PC-9 (cell line): ENCODE measurements at regions of chr4 and their contacts with region 1.

Region 1: GRCh38 chr4:152996108-152996571 is 60.0 kb downstream of the FHDC1 start:
- DNase-seq: peak; percentile 78 to 85
- H3K4me3 ChIP-seq: peak overlapping the region; percentile 31; the same call in 1 of the 2 replicates
- H3K27ac ChIP-seq: peak overlapping the region; percentile 84
- H3K4me1 ChIP-seq: peaks cover 53% of the 10 kb centered on the region
- H3K27me3 ChIP-seq: no peaks in the 10 kb centered on the region
- CTCF ChIP-seq: no peak

Region 2: DNA sequence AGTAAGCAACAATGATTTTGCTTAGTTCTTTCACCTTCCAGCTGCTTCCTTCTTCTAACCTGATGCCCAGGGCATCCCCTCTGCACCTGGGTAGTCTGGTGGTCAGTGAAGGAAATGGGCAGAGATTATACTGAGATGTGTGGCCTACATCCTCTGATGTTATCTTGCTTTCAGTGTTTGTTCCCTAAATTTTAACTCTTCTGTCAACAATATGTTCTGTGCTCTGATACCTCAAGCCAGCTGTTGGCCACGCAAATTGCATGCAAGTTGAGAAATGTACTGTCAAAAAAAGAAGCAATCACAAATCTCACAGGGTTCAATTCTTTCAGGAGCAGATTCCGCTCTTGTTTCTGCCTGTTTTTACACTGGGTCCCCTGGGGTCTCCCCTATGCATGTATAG is 534.1 kb before region 1 on chr4:
- CTCF ChIA-PET with region 1: no interaction called
- POLR2A ChIA-PET with region 1: no interaction called
- intact Hi-C with region 1: no loop called
- DNase-seq: no peak
- H3K4me3 ChIP-seq: no peak overlapping the region
- H3K27ac ChIP-seq: no peak overlapping the region
- H3K4me1 ChIP-seq: no peaks in the 10 kb centered on the region; the same call in 1 of the 2 replicates
- H3K27me3 ChIP-seq: no peaks in the 10 kb centered on the region
- CTCF ChIP-seq: no peak

Region 3: GRCh38 chr4:152970102-152970820 is 25.9 kb before region 1 on chr4:
- CTCF ChIA-PET with region 1: interaction called, 9 read pairs
- POLR2A ChIA-PET with region 1: interaction called, 21 read pairs
- intact Hi-C with region 1: loop called (anchors 1 kb)
- DNase-seq: peak; percentile 77 to 92
- H3K4me3 ChIP-seq: no peak overlapping the region
- H3K27ac ChIP-seq: peak overlapping the region; percentile 88
- H3K4me1 ChIP-seq: peaks cover 59% of the 10 kb centered on the region
- H3K27me3 ChIP-seq: no peaks in the 10 kb centered on the region
- CTCF ChIP-seq: no peak

Region 4: DNA sequence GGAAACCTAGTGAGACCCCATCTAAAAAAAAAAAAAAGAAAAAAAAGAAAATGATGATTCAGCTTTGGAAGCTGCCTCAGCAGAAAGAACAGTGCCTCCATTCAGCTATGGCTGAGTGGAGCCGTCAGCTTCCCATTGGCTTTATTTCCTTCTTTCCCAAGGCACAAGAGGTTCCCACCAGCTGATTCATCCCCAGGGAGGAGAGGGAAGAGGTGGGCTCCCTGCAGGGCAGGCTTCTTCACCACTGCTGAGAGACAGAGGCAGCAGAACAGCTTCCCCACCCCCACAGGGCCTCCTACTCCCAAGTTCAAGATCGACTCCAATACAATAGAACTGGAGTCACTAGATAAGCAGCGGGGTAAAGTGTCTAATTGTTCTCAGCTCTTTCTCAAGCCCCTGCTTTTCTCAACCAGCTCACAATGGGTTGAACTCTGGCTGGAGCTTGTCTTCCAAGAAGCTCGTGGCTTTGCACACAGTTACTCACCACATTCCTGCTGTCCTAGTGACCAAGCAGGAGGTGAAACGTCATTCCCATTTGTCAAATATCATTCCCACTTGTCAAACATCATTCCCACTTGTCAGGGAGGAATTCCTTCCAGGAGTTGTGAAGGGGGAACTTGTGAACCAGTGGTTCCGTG is 12.2 kb before region 1 on chr4:
- CTCF ChIA-PET with region 1: interaction called, 4 read pairs
- POLR2A ChIA-PET with region 1: interaction called, 5 read pairs
- intact Hi-C with region 1: loop called (anchors 1 kb)
- DNase-seq: peak; percentile 41 to 77
- H3K4me3 ChIP-seq: no peak overlapping the region
- H3K27ac ChIP-seq: peak overlapping the region; percentile 80
- H3K4me1 ChIP-seq: peaks cover 56% of the 10 kb centered on the region
- H3K27me3 ChIP-seq: no peaks in the 10 kb centered on the region
- CTCF ChIP-seq: no peak

Region 5: DNA sequence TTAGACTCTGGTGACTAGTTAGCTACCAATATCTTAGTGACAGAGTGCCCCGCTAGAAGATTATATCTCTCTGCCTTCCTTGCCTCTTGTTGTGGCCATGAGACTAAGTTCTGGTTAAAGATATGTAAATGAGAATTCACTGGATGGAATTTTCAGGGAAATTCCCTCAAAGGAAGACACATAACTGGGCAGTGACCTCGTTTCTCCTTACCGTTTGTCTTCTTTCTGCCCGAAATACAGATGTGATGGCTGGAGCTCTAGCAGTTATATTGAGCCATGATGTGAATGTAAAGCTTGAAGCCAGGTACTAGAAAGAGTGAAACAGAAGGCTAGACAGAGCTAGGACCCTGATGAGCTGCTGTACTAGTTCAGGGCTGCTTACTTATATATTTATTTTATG is 20.5 kb after region 1 on chr4:
- CTCF ChIA-PET with region 1: no interaction called
- POLR2A ChIA-PET with region 1: interaction called, 10 read pairs
- intact Hi-C with region 1: no loop called
- DNase-seq: no peak
- H3K4me3 ChIP-seq: no peak overlapping the region
- H3K27ac ChIP-seq: no peak overlapping the region
- H3K4me1 ChIP-seq: no peaks in the 10 kb centered on the region
- H3K27me3 ChIP-seq: no peaks in the 10 kb centered on the region
- CTCF ChIP-seq: no peak

Region 6: DNA sequence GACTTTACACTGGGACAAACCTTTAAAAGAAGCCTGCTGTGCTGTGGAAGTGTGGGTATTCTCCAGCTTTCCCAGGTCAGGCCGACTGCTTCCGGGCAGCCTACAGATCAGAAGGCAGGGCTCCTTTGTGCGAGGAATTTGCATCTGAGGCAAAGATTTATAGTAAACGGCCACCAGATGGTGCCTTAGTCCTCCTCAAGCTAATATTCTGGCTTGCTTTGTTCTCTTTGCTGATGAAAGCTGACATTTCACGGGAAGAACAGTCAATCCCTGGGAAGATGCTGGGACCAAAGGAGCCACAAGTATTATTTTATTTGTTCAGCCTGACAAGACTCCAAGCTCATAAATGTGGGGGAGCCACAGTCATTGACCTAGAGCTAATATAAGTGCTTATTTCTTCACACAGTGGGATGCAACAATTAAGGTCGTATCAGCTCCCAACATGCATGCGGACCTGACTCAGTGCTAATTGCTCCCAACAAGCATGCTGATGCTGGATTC is 87.4 kb after region 1 on chr4:
- CTCF ChIA-PET with region 1: interaction called, 8 read pairs
- POLR2A ChIA-PET with region 1: interaction called, 22 read pairs
- intact Hi-C with region 1: loop called (anchors 1 kb)
- DNase-seq: peak; percentile 55 to 66
- H3K4me3 ChIP-seq: no peak overlapping the region
- H3K27ac ChIP-seq: peak overlapping the region; percentile 49; the same call in 1 of the 2 replicates
- H3K4me1 ChIP-seq: peaks cover 18% of the 10 kb centered on the region
- H3K27me3 ChIP-seq: no peaks in the 10 kb centered on the region
- CTCF ChIP-seq: peak; percentile 70

Region 7: DNA sequence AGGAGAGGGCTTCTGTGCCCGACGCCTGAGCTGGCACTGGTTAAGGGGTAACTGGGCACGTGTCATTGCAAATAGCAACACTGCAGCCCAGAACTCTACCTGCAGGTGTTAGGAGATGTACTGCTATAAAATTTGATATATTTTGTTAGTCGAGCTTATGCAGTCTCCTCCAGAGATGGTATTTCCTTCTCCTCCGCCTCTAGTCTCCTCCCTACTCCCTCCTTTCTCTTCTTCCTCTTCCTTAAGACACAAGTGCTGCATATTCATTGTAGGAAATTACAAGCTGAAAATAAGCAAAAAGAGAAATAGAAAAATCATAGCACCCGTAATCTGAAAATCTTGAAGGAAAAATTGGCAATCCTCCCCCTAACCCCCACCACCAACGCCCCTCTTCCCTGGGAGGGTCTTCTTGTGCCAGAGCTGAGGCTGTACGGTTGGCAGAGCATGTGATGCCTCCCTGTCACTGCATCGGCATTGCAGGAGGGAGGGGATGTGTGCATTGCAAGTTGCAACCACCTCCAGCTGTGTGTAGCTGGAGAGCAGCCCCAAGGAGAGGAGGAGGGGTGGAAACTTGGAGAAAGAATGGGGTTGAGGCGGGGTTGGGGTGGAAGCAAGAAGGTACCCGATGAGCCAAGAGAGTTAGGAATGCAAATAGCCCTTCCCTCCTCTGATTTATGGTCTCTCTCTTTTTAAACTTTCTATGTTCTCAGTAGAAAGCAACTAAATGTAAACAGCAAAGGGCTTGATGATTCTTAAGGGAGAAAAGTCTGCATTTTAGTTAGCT is 300.1 kb after region 1 on chr4:
- CTCF ChIA-PET with region 1: no interaction called
- POLR2A ChIA-PET with region 1: interaction called, 3 read pairs
- intact Hi-C with region 1: loop called (anchors 10 kb)
- DNase-seq: peak in 1 of 2 experiments; percentile 50
- H3K4me3 ChIP-seq: no peak overlapping the region
- H3K27ac ChIP-seq: peak overlapping the region; percentile 68; the same call in 1 of the 2 replicates
- H3K4me1 ChIP-seq: peaks cover 41% of the 10 kb centered on the region
- H3K27me3 ChIP-seq: no peaks in the 10 kb centered on the region
- CTCF ChIP-seq: no peak

Region 8: DNA sequence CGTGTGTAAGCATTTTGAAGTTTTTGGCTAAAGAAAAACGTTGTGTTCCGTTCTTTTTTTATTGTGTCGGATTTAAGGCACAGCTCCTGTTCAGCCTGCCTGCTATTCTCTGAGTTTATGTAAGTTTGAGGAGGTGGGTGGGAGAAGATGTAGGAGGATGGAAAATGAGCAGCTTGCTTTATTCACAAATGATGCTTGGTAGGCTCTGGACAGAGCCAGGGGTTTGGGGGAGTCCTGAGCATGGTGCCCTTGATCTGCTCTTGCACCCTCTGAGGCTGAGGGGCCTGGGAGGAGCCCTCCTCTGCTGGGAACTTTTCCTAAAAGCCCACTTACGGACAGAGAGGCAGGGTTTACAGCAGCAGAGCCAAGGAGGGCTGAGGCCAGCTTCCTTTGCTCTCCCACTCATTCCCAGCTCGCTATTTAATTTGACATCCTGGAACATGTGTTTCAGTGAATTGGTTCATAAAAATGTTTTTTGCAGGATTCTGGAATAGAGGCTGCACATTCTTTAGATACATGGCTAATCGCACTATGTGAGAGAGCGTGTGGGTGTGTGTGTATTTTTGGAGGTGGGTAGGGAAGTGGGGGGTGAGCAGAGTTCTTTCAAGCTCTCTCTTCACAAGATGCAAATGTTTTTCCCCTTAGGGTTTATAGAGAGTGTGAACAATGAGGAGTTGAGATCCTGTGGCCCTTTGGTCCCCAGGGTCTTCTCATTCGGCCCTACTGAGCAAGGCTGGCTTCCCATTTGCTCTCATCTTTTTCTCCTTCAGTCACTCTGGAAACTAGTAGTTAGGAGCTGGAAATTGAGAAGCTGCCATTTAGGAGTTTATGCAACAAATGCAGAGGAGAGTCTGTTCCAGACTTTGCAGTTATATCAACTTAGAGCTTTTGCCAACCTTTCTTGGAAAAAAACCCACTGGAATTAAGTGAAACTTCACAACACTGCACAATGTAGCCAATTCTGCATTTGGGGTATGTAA is 502.1 kb after region 1 on chr4:
- CTCF ChIA-PET with region 1: no interaction called
- POLR2A ChIA-PET with region 1: no interaction called
- intact Hi-C with region 1: loop called (anchors 5 kb)
- DNase-seq: no peak
- H3K4me3 ChIP-seq: no peak overlapping the region
- H3K27ac ChIP-seq: peak overlapping the region; percentile 66
- H3K4me1 ChIP-seq: peaks cover 36% of the 10 kb centered on the region
- H3K27me3 ChIP-seq: no peaks in the 10 kb centered on the region
- CTCF ChIP-seq: no peak